Right ventricle myocardium superior (tissue), 1 donor: ENCODE measurements at regions of chr7 and their contacts with region 1.

Region 1: GRCh38 chr7:12674849-12675248 is 12.6 kb upstream of the ARL4A start:
- DNase-seq: no peak
- ATAC-seq: peak; percentile 52

Region 2: GRCh38 chr7:13179102-13179501 is 504.3 kb after region 1 on chr7:
- intact Hi-C with region 1: loop called (anchors 10 kb)
- DNase-seq: no peak
- ATAC-seq: peak; percentile 46